ENCODE measurements at regions of chr2 and their contacts with region 1.

Region 1: DNA sequence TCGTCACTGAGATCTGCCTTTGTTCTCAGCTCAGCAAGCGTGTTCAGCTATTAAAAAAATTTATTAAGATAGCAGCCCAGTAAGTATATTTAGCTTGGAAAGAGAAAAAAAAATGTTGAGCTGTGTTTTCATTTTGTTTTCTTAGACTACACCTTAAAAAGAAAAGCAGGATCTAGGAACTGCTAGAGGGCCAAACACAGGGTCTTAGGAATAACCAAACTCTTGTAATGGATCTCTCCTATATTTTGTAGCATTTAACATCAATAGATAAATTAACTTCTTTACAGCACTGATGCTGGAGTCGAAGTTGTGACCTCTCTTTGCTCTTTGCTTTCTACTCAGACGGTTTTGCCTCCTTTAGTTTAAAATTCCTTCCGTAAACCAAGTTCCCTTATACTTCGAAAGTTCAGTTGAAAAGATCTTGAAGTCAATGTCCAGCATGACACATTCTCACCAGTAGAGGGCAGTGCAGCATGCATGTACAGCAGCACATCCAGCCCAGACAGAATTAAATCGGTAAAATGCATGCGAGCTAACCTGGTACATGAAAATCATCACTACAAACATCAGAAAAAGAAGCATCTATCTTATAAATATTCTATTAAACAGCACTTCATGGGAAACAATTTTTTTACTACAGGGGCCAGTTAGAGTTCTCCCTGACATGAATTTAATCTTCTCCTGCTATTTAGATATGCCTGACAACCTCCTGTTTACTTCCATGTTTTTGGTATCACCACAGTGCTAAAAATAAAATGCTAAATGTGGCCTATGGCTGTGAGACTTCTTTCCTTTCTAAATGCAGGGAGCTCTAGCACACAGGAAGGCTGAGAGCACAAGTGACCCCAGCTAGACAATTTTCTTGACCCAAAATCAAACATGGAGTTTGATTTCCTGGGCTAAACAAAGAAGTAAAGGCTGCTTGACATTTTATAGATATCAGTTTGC is 48.2 kb upstream of the MAP3K20 start:
- DNase-seq: no peak
- H3K4me3 ChIP-seq: no peak overlapping the region
- CTCF ChIP-seq: peak; percentile 76

Region 2: DNA sequence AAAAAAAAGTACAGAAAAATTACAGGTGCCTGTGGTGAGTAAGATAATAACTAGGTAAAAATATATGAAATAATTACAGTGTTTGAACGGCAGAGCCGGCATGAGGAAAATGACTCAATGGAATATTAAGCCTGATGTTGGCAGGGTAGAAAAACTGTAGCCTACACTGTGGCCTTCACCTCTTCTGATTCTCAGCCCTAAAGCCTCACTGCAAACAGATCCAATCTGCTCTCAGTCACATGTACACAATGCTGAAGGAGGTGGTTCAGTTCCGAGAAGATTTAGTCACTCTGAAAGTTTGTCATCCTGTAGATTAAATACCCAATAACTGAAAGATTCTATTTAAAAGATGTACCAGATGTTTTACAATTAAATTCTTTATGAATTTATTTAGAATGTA is 18.7 kb before region 1 on chr2:
- CTCF ChIA-PET with region 1: interaction called, 27 read pairs
- POLR2A ChIA-PET with region 1: no interaction called
- DNase-seq: no peak
- H3K4me3 ChIP-seq: no peak overlapping the region
- CTCF ChIP-seq: no peak

Region 3: DNA sequence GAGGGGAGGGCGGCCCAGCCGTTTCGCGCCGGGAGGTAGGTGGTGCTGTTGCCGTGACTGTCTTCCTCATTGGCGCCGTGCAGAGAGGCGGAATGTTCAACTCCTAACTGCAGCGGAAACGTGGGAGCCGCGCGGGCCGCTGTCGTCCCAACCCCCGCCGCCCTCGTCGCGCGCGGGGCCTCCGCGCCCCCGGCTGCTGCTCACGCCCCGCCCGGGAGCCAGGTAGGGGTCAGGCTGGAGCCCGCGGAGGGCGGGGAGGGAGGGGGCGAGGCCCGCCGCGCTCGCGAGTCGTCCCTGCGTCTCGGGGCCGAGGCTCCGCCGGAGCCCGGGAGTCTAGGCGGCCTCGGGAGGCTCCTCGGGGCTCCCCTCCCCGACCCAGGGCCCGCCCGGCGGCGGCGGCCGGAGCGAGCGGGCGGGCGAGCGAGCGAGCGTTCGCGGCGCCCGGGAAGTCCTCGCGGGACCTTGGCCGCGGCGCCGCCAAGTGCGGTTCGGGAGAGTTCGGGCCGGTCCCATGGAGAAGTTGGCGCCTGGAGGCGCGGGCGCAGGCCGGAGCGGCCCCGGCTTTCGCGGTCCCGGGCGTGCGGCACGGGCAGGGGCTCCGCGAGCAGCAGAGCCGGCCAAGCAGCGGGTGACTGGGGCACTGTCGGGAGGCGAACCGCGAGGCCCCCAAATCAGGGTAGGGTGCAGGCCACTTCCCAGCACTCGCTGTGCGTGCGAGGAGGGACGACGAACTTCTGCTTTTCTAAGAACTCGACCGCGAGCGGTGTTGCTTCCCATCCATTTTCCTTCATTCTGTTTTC is 48.5 kb after region 1 on chr2 and contains the start of gene MAP3K20:
- CTCF ChIA-PET with region 1: interaction called, 21 read pairs
- POLR2A ChIA-PET with region 1: interaction called, 3 read pairs
- DNase-seq: no peak
- H3K4me3 ChIP-seq: peak within 1 kb of the TSS; percentile 74
- CTCF ChIP-seq: peak; percentile 80

Region 4: DNA sequence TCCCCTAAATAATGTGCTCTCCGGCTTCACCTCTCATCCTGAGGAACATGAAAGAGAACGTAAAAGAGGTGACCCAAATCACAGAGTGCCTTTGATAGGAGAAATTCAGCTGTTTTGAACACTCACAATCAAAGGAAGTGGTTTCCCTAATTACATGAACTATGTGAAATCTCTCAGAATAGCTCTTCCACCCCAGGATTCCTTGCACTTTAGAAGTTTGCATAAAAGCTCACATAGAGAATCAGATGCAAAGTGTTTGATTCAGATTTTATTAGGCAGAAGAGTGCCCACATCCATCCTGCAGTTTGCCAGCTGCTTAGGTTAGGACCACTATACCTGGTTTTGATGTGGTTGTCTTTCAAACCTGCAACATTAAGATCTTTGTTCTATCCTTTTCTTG is 109.1 kb after region 1 on chr2:
- CTCF ChIA-PET with region 1: interaction called, 13 read pairs
- POLR2A ChIA-PET with region 1: no interaction called
- DNase-seq: no peak
- H3K4me3 ChIP-seq: no peak overlapping the region
- CTCF ChIP-seq: no peak

Region 5: GRCh38 chr2:173204316-173204715 is 176.9 kb after region 1 on chr2:
- CTCF ChIA-PET with region 1: interaction called, 678 read pairs
- POLR2A ChIA-PET with region 1: no interaction called
- DNase-seq: no peak
- H3K4me3 ChIP-seq: no peak overlapping the region
- CTCF ChIP-seq: no peak